Sciatic nerve (tissue), 2 donors: ENCODE measurements at regions of chr5 and their contacts with region 1.

Region 1: GRCh38 chr5:147431586-147431985 is 78.3 kb downstream of the DPYSL3 start:
- DNase-seq: no peak
- ATAC-seq: no peak

Region 2: DNA sequence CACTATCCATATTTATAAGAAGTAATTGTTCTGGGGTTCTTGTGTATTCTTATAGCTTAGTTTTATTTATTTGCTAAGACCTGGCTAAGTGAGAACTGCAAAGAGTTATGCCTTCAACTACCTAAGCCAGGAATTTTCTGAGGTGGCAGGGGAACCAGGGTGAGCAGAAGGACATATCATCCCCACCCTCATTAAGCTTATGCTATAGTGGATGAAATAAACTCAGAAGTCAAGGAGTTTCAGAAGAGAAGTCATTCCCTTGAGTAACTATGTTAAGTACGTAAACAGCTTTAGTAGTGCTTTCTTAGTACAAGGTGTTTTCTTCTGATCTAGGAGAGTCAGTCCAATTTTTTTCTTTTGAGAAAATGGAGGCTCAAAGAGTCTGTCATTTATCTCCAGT is 155.1 kb before region 1 on chr5:
- intact Hi-C with region 1: no loop called
- DNase-seq: no peak
- ATAC-seq: no peak

Region 3: GRCh38 chr5:148542812-148543211 is 1111.2 kb after region 1 on chr5:
- intact Hi-C with region 1: loop called (anchors 5 kb)
- DNase-seq: no peak
- ATAC-seq: no peak